Right lobe of liver (tissue), 6 donors: ENCODE measurements at regions of chr15 and their contacts with region 1.

Region 1: GRCh38 chr15:68421115-68421551 is 10.8 kb downstream of the ITGA11 start:
- DNase-seq: peak in 1 of 3 donors; percentile 34
- ATAC-seq: no peak
- H3K4me3 ChIP-seq: no peak overlapping the region
- H3K27ac ChIP-seq: no peak overlapping the region
- H3K4me1 ChIP-seq: no peaks in the 10 kb centered on the region
- H3K27me3 ChIP-seq: no peaks in the 10 kb centered on the region
- CTCF ChIP-seq: no peak
- POLR2A ChIP-seq: no peak

Region 2: DNA sequence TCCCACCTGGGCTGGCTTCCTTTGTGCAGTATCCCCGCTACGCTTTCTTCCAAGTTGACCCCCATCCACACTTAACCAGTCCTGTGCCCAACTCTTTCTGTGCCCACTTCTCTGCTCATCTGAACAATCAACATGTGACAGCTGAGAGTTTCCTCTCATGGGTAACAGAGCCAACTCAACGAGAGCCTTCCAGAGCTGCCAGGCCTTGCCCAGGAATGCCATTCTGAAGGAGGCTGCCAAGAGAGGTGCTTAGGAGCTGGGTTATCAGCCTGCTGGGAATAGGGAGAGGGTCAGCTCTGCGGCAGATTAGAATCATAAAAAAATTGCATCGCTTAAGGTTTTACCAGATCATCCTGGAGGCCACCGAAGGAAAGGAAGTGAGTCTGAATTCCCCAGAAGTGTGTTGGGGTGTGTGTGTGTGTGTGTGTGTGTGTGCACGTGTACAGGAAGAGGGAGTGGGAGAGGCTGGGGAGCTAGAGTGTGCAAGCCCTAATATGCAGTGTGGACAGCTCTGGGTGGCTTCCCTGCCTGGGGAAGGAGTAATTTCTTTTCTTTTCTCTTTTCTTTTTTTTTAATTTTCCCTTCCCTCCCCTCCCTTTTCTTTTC is 55.9 kb before region 1 on chr15:
- intact Hi-C with region 1: loop called in 1 of 2 experiments (anchors 10 kb)
- DNase-seq: no peak
- ATAC-seq: peak; percentile 17 to 72 (median 54)
- H3K4me3 ChIP-seq: no peak overlapping the region
- H3K27ac ChIP-seq: no peak overlapping the region
- H3K4me1 ChIP-seq: no peaks in the 10 kb centered on the region
- H3K27me3 ChIP-seq: no peaks in the 10 kb centered on the region
- CTCF ChIP-seq: no peak
- POLR2A ChIP-seq: no peak

Region 3: DNA sequence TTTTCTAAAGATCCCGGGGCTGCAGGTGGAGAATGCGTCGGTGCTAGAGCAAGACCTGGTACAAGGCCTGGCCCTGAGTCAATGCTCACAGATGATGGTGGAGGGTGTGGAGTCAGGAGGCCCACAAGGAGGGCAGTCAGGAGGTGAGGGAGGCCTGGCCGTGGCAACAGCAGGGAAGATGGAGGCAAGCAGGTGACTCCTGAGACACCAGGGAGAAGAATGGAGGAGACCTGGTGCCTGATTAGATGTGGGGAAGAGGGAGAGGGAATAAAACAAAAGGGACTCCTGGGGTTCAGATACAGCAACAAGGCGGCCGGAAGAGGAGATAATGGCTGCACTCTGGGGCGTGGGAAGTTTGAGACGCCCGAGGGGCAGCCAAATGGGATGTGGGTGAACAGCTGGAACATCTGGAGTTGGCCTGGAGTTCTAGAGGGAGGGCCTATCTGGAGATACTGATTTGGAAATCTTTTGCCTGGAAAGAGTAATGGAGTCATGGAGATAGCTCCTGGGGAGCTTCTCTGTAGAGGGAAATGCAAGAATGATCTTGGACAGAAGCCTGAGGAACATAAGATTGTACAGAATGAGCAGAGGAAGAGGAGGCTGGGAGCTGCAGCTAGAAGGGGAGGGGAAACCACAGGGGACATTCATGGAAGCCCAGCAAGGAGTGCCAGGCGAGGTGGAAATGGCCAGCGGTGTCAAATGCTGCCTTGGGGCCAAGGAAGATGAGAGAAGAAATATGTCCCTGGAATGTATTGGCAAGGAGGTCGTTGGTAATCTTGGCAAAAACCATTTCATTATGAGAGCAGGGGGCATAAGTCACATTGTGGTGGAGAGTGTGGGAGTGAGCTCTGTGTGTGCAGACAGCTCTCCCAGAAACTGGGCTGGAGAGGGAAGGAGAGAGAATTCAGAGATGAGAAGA is 90.2 kb after region 1 on chr15:
- intact Hi-C with region 1: no loop called
- DNase-seq: no peak
- ATAC-seq: no peak
- H3K4me3 ChIP-seq: no peak overlapping the region
- H3K27ac ChIP-seq: no peak overlapping the region
- H3K4me1 ChIP-seq: no peaks in the 10 kb centered on the region
- H3K27me3 ChIP-seq: no peaks in the 10 kb centered on the region
- CTCF ChIP-seq: no peak
- POLR2A ChIP-seq: no peak